K562 (cell line): ENCODE measurements at regions of chr3 and their contacts with region 1.

Region 1: GRCh38 chr3:14124615-14125190 is at the starts of genes CHCHD4 and TMEM43:
- DNase-seq: peak; percentile 98 to 100 (median 99)
- ATAC-seq: peak; percentile 83
- H3K4me3 ChIP-seq: peak within 1 kb of the TSS; percentile 72
- H3K27ac ChIP-seq: peak within 1 kb of the TSS; percentile 86
- H3K4me1 ChIP-seq: peaks cover 35 to 45% of the 10 kb centered on the region in 2 experiments
- H3K27me3 ChIP-seq: no peaks in the 10 kb centered on the region
- CTCF ChIP-seq: no peak
- EP300 ChIP-seq: peak; percentile 8; the same call in 1 of the 2 replicates
- POLR2A ChIP-seq: peak; percentile 79
- RAD21 ChIP-seq: no peak
- polyA plus RNA-seq, gene CHCHD4: 152 to 225 TPM
- polyA plus RNA-seq, gene TMEM43: 16.7 to 29.4 TPM

Region 2: DNA sequence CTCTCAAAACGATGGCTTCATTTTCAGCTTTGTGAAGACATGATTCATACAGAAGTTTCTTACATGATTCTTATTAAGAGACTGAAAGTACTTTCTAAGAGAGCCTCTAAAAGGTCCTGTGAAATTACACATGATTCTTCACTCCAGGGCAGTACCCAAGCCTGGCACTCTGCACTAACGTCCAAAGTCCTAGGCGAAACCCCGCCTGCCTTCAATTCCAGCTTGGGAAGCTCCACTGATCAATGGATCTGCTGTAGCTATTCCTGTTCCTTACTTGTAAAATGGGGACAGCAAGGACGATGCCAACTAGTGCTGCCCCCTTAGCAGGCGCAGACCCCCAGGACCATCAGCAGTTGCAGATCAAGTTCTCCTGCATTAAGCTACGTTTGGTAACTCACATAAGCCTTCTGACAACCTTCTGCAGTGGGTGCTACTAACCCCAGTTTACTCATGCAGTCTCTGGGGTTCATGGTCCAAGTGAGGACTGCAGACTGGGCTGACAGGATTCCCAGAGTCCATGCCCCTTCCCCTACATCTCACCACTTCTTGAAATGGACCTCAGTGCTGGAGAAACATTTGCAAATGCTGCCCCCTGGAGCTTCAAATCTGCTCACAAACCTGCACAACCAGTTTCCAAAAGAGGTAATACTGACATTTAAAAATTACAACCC is 10.6 kb before region 1 on chr3:
- CTCF ChIA-PET with region 1: no interaction called
- POLR2A ChIA-PET with region 1: interaction called, 16 read pairs
- in situ Hi-C with region 1: no loop called
- intact Hi-C with region 1: no loop called
- DNase-seq: no peak
- ATAC-seq: peak; percentile 45; the same call in 2 of the 3 replicates
- H3K4me3 ChIP-seq: no peak overlapping the region
- H3K27ac ChIP-seq: no peak overlapping the region
- H3K4me1 ChIP-seq: no peaks in the 10 kb centered on the region; a peak in 1 of 5 replicates
- H3K27me3 ChIP-seq: no peaks in the 10 kb centered on the region
- CTCF ChIP-seq: peak; percentile 18 to 59 (median 45); a peak in 5 of 6 replicates
- EP300 ChIP-seq: no peak
- POLR2A ChIP-seq: no peak
- RAD21 ChIP-seq: peak in 1 of 2 experiments; percentile 32; a peak in 2 of 4 replicates

Region 3: DNA sequence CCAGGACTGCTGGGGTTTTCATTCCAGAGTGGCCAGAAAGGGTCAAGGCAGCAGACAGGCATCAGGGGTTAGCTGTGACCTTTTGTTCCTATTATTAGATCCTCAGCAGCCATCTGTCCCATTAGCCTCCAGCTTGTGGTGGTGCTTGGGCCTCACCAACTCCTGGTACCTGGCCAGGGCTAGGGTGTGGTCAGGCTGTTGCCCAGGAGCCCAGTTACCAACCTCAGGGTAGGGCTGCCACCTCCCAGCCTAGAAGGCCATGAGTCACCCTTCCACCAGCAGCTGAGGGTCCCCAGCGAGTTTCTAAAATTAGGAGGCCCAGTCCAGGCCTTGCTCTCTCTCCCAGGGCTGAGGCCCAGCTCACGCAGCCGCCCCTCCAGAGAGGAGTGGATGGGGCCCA is 12.3 kb after region 1 on chr3:
- CTCF ChIA-PET with region 1: no interaction called
- POLR2A ChIA-PET with region 1: interaction called, 24 read pairs
- in situ Hi-C with region 1: no loop called
- intact Hi-C with region 1: no loop called
- DNase-seq: no peak
- ATAC-seq: no peak
- H3K4me3 ChIP-seq: no peak overlapping the region
- H3K27ac ChIP-seq: no peak overlapping the region
- H3K4me1 ChIP-seq: peaks cover 0 to 3% of the 10 kb centered on the region in 2 experiments; a peak in 1 of 5 replicates
- H3K27me3 ChIP-seq: no peaks in the 10 kb centered on the region
- CTCF ChIP-seq: no peak
- EP300 ChIP-seq: no peak
- POLR2A ChIP-seq: no peak
- RAD21 ChIP-seq: no peak

Region 4: DNA sequence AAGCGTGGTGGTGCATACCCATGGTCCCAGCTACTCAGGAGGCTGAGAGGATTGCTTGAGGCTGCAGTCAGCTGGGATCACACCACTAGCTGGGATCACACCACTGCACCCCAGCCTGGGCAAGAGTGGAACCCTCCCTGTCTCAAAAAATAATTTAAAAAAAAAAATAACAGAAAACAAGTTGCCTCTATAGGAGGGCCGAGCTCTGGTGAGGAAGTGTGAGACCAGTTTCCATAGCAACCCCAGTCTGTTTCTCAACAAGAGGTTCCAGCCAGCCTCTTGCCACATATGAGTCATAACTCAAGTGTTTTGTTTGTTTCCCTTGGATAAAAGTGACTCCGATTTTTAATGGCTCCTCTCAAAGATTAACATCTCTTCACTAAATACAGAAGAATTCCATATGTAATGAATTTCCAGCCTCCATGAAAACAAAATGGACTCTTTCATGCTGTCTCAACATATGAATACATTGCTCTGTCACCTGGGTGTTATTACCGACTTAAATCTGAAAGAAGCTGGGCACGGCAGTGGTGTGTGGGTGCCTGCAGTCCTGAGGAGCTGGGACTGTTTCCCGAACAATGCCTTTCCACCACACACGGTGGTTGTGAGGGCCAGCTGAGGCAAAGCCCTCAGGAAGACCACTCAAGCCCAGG is 19.8 kb after region 1 on chr3:
- CTCF ChIA-PET with region 1: no interaction called
- POLR2A ChIA-PET with region 1: interaction called, 24 read pairs
- in situ Hi-C with region 1: no loop called
- intact Hi-C with region 1: no loop called
- DNase-seq: peak; percentile 85 to 87 (median 86)
- ATAC-seq: peak; percentile 85
- H3K4me3 ChIP-seq: no peak overlapping the region
- H3K27ac ChIP-seq: peak overlapping the region; percentile 67; the same call in 2 of the 3 replicates
- H3K4me1 ChIP-seq: peaks cover 13 to 14% of the 10 kb centered on the region in 2 experiments
- H3K27me3 ChIP-seq: no peaks in the 10 kb centered on the region
- CTCF ChIP-seq: no peak
- EP300 ChIP-seq: peak; percentile 56
- POLR2A ChIP-seq: no peak
- RAD21 ChIP-seq: no peak

Region 5: DNA sequence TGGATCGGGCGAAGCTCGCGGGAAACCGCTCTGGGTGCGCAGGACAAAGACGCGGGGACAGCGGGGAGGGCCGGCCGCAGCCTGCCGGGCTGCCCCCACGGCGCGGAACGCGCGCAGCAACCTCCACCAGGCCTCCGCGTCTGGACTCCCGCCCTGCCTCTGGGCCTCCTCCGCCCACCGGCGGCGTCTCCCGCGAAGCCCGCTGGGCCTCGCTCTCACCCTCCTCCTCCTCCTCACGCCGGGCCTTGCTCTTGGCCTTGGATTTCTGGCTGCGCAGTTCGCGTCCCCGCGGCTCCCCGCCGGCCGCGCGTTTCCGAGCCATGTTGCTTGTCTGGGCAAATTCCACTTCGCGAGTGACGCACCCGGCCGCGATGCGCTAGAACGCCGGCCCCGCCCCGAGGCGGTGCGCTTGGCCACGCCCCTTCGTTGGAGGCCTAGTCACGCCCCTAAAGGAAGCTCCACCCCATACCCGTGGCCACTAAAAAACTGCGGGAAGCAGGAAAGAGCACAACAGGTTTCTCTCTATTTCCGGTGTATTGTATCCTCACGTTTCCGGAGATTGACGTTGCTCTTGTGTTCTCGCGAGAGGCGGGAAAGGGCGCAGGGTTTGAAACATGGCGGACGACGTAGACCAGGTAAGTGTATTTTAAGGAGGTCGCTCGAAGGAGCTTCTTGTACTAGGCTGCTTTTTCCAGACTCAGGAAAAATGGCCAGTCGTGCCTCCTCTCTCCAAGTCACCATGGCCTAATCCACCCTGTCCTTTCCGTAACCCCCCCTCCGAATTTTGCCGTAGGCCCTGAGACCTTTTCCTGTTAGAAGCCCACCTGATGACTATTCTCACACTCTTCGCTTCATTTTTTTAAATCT is 53.8 kb after region 1 on chr3 and contains the starts of genes LSM3 and XPC:
- CTCF ChIA-PET with region 1: no interaction called
- POLR2A ChIA-PET with region 1: interaction called, 7 read pairs
- in situ Hi-C with region 1: no loop called
- intact Hi-C with region 1: loop called (anchors 1 kb)
- DNase-seq: peak; percentile 95 to 99 (median 96)
- ATAC-seq: peak; percentile 96
- H3K4me3 ChIP-seq: peak within 1 kb of the TSS; percentile 65
- H3K27ac ChIP-seq: peak within 1 kb of the TSS; percentile 89
- H3K4me1 ChIP-seq: peaks cover 13 to 41% of the 10 kb centered on the region in 2 experiments
- H3K27me3 ChIP-seq: no peaks in the 10 kb centered on the region
- CTCF ChIP-seq: peak in 2 of 3 experiments; percentile 1 to 19; a peak in 1 of 6 replicates
- EP300 ChIP-seq: no peak
- POLR2A ChIP-seq: peak; percentile 98
- RAD21 ChIP-seq: no peak
- polyA plus RNA-seq, gene LSM3: 180 to 203 TPM
- polyA plus RNA-seq, gene XPC: 3.8 to 4.1 TPM